ENCODE measurements at regions of chr1 and their contacts with region 1.

Region 1: DNA sequence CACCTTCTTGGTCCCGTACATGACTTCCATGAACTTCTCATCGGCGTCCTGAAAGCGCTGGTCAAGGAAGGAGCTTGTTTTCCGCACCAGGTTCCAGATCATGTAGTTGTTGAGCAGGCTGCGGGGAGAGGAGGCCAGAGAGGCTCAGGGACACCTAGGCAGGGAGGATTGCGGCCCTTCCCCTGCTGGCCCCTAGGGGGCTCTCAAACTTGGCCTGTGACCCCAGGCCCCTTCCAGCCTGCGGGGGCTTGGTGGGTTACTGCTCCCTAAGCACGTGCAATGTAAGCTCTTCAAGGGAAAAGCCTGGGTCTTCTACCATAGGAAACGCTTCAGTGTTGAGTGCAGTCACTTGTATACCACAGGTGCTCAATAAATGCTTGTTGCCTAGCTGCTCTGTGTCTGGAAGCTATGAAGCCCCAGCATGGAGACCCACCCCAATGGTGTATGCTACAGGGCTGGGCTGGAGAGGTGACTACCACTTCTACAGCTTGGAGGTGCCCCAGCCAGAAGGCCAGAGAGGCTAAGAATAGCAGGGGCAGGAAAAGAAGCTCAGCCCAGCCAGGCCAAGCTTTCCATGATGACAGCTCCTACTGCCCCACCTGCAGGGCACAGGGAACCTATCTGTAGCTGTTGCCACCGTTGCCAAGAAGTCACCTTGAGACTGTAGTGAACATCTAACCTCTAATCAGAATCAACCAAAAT is 45.1 kb downstream of the ECE1 start:
- DNase-seq: peak in 1 of 2 experiments; percentile 82
- H3K4me3 ChIP-seq: no peak overlapping the region
- H3K27ac ChIP-seq: no peak overlapping the region
- H3K4me1 ChIP-seq: peaks cover 0 to 2% (median 0%) of the 10 kb centered on the region in 4 experiments; a peak in 3 of 7 replicates
- H3K27me3 ChIP-seq: no peaks in the 10 kb centered on the region
- CTCF ChIP-seq: peak; percentile 84 to 88 (median 87)
- EP300 ChIP-seq: no peak
- POLR2A ChIP-seq: no peak
- RAD21 ChIP-seq: peak; percentile 46 to 55

Region 2: DNA sequence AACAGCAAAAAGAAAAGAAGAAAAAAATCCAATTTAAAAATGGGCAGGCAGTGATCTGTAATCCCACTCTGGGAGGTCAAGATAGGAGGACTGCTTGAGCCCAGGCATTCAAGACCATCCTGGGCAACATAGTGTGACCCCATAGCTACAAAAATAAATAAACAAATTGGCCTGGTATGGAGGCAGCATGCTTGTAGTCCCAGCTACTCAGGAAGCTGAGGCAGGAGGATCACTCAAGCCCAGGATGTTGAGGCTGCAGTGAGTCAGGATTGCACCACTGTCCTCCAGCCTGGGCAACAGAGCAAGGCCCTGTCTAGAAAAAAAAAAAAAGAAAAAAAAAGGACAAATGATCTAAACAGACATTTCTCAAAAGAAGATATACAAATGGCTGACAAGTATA is 168.1 kb before region 1 on chr1:
- CTCF ChIA-PET with region 1: no interaction called
- POLR2A ChIA-PET with region 1: no interaction called
- DNase-seq: no peak
- H3K4me3 ChIP-seq: no peak overlapping the region
- H3K27ac ChIP-seq: no peak overlapping the region
- H3K4me1 ChIP-seq: no peaks in the 10 kb centered on the region
- H3K27me3 ChIP-seq: no peaks in the 10 kb centered on the region
- CTCF ChIP-seq: no peak
- EP300 ChIP-seq: no peak
- POLR2A ChIP-seq: no peak
- RAD21 ChIP-seq: no peak

Region 3: DNA sequence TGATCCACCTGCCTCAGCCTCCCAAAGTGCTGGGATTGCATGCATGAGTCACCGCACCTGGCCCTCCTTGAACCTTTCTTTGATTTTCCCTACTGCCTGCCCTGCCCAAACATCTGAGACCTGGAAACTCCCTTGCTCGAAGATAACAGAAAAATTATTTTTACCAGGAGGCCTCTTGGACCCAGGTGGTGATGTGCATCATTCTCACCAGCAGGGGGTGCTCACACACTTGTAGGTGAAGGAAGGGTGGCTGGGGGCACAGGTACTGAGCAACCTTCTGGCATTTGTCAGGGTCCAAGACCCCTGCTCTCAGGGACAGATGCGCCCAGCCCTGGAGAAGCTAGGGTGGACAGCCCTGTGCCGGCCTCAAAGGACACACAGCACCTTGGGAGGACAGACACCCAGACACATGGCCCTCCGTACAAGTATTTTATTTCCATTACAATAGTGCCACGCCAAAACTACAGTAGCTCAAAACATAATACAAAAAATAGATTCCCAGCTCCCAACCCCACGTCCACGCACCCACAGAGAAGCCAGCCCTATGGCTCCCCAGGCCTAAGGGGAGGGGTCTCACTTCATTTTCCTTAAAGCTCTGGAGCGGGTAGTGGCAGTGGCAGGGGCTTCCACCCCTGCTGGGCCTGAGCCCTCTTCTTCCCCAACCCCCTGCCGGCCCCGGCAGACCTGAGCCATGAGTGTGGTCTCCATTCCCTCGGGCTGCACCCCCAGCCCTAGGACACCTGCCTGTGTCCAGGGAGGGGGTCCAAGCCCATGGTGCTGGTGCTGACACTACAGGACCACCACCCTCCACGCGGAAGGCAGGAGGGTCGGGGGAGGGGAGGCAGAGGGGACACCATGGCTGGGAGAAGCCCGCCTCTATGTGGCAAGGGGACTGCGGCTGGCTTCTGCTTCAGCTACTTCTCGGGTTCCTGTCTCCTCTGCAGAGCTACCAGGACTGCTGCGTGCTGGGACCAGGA is 28.0 kb before region 1 on chr1:
- CTCF ChIA-PET with region 1: interaction called, 36 read pairs
- POLR2A ChIA-PET with region 1: no interaction called
- DNase-seq: peak in 1 of 2 experiments; percentile 88
- H3K4me3 ChIP-seq: no peak overlapping the region
- H3K27ac ChIP-seq: no peak overlapping the region
- H3K4me1 ChIP-seq: peaks cover 0 to 5% (median 5%) of the 10 kb centered on the region in 4 experiments; a peak in 5 of 7 replicates
- H3K27me3 ChIP-seq: no peaks in the 10 kb centered on the region
- CTCF ChIP-seq: peak; percentile 60 to 86 (median 80)
- EP300 ChIP-seq: no peak
- POLR2A ChIP-seq: no peak
- RAD21 ChIP-seq: peak; percentile 43 to 67; a peak in 3 of 4 replicates

Region 4: DNA sequence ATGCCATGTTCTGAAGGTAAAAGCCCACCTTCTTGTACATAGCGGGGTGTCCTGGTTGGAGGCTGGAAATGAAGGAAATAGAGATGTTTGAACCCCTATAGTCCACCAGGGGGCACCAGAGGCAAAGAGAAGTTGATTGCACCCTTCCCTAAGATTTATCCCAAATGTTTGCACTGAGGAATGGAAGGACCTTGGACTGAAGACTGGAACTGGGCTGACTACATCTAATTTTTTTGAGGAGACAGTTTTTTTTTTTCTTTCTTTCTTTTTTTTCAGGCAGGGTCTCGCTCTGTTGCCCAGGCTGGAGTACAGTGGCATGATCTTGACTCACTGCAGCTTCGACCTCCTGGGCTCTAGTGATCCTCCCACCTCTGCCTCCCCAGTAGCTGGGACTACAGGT is 13.1 kb before region 1 on chr1:
- CTCF ChIA-PET with region 1: interaction called, 77 read pairs
- POLR2A ChIA-PET with region 1: interaction called, 3 read pairs
- DNase-seq: peak in 1 of 2 experiments; percentile 59
- H3K4me3 ChIP-seq: no peak overlapping the region
- H3K27ac ChIP-seq: no peak overlapping the region
- H3K4me1 ChIP-seq: no peaks in the 10 kb centered on the region
- H3K27me3 ChIP-seq: no peaks in the 10 kb centered on the region
- CTCF ChIP-seq: peak; percentile 25 to 75 (median 75)
- EP300 ChIP-seq: no peak
- POLR2A ChIP-seq: no peak
- RAD21 ChIP-seq: peak; percentile 89 to 90

Region 5: DNA sequence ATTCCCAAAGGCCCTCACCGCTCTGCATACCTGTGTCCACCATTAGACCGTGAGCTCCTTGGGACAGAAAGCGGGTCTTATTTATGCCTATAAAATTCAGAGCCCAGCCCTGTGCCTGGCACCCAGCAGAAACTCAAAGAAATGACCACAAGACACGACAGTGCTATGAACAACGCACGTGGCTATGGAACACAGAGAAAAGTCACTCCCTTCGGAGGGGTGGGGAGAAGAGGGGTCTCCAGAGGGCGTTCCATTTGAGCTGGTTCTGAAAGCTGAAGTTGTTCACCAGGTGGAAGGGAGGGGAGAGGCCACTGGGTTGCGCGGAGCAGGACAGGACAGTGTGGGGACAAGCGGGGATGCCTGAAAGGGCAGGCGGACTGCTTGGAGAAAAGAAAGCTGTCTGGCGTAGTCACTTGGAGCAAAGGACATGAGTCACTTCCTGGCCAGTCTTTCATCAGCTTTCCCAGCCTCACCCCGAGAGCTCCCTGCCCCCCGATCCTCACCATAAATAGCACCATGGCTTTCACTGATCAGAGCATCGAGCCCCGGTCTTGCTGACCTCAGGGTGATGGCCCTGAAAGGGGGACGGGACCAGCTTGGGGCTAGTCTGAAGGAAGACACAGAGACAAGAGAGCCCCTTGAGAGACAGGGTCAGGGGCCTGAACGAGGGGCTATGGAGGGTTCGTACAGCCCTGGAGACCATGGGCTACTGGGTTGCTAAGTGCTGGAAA is 16.6 kb after region 1 on chr1:
- CTCF ChIA-PET with region 1: interaction called, 63 read pairs
- POLR2A ChIA-PET with region 1: interaction called, 4 read pairs
- DNase-seq: no peak
- H3K4me3 ChIP-seq: no peak overlapping the region
- H3K27ac ChIP-seq: no peak overlapping the region
- H3K4me1 ChIP-seq: peaks cover 0 to 15% (median 7%) of the 10 kb centered on the region in 4 experiments; a peak in 5 of 7 replicates
- H3K27me3 ChIP-seq: no peaks in the 10 kb centered on the region
- CTCF ChIP-seq: no peak
- EP300 ChIP-seq: no peak
- POLR2A ChIP-seq: no peak
- RAD21 ChIP-seq: no peak

Region 6: GRCh38 chr1:21318714-21319159 is 73.6 kb after region 1 on chr1:
- CTCF ChIA-PET with region 1: interaction called, 14 read pairs
- POLR2A ChIA-PET with region 1: no interaction called
- DNase-seq: no peak
- H3K4me3 ChIP-seq: no peak overlapping the region
- H3K27ac ChIP-seq: no peak overlapping the region
- H3K4me1 ChIP-seq: peaks cover 24 to 59% (median 34%) of the 10 kb centered on the region in 4 experiments
- H3K27me3 ChIP-seq: no peaks in the 10 kb centered on the region; a peak in 1 of 7 replicates
- CTCF ChIP-seq: no peak
- EP300 ChIP-seq: no peak
- POLR2A ChIP-seq: no peak
- RAD21 ChIP-seq: no peak

Region 7: DNA sequence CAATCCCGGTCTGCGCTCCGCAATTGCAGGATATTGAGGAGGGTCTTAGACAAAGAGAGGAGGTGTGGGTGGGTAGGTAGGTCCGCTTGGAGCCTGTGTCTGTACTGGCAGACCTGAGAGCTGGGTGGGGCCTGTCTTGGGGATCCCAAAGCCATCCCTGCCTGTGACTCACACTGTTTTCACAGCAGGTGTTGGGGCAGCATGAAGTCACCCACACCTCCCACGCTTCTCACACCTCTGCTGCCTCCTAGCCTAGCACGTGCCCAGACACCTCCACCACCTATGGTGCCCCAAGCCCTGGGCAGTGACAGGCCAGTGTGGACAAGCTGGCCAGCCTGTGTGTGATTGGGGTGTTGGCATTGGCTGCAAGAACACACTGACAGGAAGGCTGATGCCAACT is 110.8 kb after region 1 on chr1:
- CTCF ChIA-PET with region 1: interaction called, 13 read pairs
- POLR2A ChIA-PET with region 1: no interaction called
- DNase-seq: no peak
- H3K4me3 ChIP-seq: no peak overlapping the region
- H3K27ac ChIP-seq: no peak overlapping the region
- H3K4me1 ChIP-seq: peaks cover 0 to 2% (median 0%) of the 10 kb centered on the region in 4 experiments; a peak in 1 of 7 replicates
- H3K27me3 ChIP-seq: no peaks in the 10 kb centered on the region
- CTCF ChIP-seq: no peak
- EP300 ChIP-seq: no peak
- POLR2A ChIP-seq: no peak
- RAD21 ChIP-seq: no peak